Aorta (tissue), 5 donors: ENCODE measurements at regions of chr19 and their contacts with region 1.

Region 1: GRCh38 chr19:35716801-35717666 is 769 bp upstream of the KMT2B start:
- DNase-seq: peak; percentile 96 to 98
- ATAC-seq: peak; percentile 97
- H3K4me3 ChIP-seq: peak overlapping the region; percentile 76 to 93
- H3K27ac ChIP-seq: peak overlapping the region in 1 of 2 donors; percentile 37
- H3K4me1 ChIP-seq: no peaks in the 10 kb centered on the region
- H3K27me3 ChIP-seq: no peaks in the 10 kb centered on the region

Region 2: GRCh38 chr19:35154525-35155406 is 562.3 kb before region 1 on chr19 and contains the start of gene FXYD5:
- intact Hi-C with region 1: loop called in 1 of 2 experiments (anchors 5 kb)
- DNase-seq: peak; percentile 85 to 91
- ATAC-seq: peak; percentile 80
- H3K4me3 ChIP-seq: peak within 1 kb of the TSS; percentile 47 to 54
- H3K27ac ChIP-seq: peak within 1 kb of the TSS in 1 of 2 donors; percentile 32
- H3K4me1 ChIP-seq: no peaks in the 10 kb centered on the region
- H3K27me3 ChIP-seq: no peaks in the 10 kb centered on the region
- total RNA-seq, gene FXYD5: 71.7 to 126 TPM

Region 3: GRCh38 chr19:35545001-35545911 is 171.8 kb before region 1 on chr19 and contains the start of gene TMEM147:
- intact Hi-C with region 1: loop called in 1 of 2 experiments (anchors 5 kb)
- DNase-seq: peak; percentile 96 to 99
- ATAC-seq: peak; percentile 96
- H3K4me3 ChIP-seq: peak within 1 kb of the TSS; percentile 62 to 80
- H3K27ac ChIP-seq: no peak within 1 kb of the TSS
- H3K4me1 ChIP-seq: no peaks in the 10 kb centered on the region
- H3K27me3 ChIP-seq: no peaks in the 10 kb centered on the region
- total RNA-seq, gene TMEM147: 48.0 to 52.2 TPM

Region 4: DNA sequence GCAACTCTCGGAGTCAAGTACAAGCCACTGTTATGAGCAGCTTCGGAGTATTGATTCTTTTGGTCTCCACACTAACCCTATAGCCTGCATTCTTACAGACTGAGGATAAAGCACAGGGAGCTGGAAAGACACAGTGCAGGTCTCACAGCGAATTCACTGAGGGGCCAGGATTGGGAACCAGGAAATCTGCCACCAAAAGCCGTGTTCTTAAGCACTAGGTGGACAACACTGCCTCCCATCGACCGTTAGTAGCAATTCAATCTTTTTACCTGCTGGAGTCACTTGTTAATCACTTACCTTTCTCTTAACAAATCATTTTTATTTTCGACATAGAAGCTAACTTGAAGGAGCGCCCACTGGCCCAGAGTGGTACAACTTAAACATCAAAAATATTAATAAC is 124.8 kb before region 1 on chr19:
- intact Hi-C with region 1: no loop called
- DNase-seq: no peak
- ATAC-seq: no peak
- H3K4me3 ChIP-seq: no peak overlapping the region
- H3K27ac ChIP-seq: no peak overlapping the region
- H3K4me1 ChIP-seq: no peaks in the 10 kb centered on the region
- H3K27me3 ChIP-seq: no peaks in the 10 kb centered on the region

Region 5: GRCh38 chr19:35693830-35694599 is 23.0 kb before region 1 on chr19:
- intact Hi-C with region 1: loop called (anchors 1 to 2 kb)
- DNase-seq: peak; percentile 90 to 92
- ATAC-seq: peak; percentile 96
- H3K4me3 ChIP-seq: no peak overlapping the region
- H3K27ac ChIP-seq: no peak overlapping the region
- H3K4me1 ChIP-seq: no peaks in the 10 kb centered on the region
- H3K27me3 ChIP-seq: no peaks in the 10 kb centered on the region

Region 6: DNA sequence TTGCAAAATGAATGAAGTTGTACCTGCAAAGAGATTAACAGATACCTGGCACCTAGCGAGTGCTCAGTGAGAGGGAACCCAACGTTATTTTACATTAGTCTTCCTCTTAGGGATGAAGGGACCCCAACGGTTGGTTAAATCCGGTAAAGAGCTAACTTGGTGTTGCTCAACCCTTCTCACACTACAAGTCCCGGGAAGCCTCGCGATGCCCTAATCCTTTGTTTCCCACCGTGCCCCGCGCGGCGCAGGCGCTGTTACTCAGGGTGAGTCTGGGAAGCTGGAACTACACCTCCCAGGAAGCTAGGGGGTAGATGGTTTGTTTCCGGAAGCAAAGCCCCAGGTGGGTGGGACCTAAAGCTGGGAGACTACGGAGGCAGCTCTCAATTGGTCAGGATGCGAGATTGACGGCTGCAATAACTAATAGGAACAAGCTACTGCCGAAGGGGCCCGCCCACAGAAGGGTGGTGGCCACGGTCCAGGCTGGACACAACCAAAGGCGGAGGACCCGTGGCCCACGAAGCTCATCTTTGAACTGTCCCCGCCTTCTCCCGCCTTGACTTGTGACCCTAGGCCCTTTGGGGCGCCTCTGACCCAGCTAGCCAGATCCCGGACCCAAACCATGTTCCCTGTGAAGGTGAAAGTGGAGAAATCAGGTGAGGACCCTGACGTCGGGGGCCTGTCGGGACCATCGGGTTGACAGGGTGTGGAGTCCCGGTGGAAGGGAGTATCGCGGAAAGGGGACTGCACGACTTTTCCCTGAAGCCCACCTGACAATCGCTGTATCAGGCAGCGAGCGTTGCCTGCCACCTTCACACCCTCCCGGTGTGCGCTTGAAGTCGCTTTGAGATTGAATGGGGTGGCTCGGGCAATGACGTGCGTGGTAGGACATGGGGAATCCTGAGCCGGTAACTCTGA is 31.3 kb after region 1 on chr19 and contains the start of gene LIN37:
- intact Hi-C with region 1: no loop called
- DNase-seq: peak; percentile 99
- ATAC-seq: peak; percentile 92
- H3K4me3 ChIP-seq: peak within 1 kb of the TSS; percentile 55 to 88
- H3K27ac ChIP-seq: peak within 1 kb of the TSS in 1 of 2 donors; percentile 55
- H3K4me1 ChIP-seq: no peaks in the 10 kb centered on the region
- H3K27me3 ChIP-seq: no peaks in the 10 kb centered on the region
- total RNA-seq, gene LIN37: 10.6 to 13.3 TPM